ENCODE measurements at regions of chr12 and their contacts with region 1.

Region 1: DNA sequence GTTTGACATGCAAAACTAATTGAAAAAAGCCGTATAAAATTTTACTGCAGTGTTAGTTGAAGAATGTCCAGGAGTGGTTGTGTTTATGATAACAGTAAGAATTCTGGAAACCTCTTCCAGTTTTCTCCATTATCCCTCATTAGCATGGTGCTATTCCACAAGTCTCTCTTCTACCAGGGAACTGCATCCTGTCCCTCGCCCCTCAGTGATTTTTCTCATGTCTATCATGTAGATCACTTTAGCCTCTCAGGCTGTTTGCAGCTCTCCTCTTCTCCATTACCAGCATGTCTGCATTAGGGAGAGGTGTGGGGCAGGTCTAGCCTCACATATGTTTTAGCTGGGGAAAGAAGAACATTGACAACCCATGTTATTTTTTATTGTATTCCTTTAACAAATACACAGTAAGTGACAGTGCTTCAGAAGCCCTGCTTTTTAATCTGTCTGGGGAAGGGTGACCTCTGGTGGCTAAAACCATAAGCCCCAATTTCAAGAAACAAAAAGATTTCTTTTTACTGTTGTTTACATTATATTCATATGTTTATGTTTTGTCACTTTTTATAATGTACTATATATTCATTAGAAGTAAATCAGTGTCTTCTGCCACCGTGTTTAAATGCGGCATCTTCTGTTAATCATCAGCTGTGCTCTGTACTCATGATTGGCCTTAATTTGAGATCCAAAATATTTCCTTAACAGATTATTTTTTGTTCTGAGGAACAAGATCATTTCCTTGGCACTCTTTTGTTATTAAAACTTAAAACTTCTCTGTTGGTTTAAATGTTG is 70.7 kb downstream of the RASSF8 start:
- DNase-seq: peak; percentile 85
- ATAC-seq: peak; percentile 56
- H3K4me3 ChIP-seq: no peak overlapping the region
- H3K27ac ChIP-seq: no peak overlapping the region
- H3K4me1 ChIP-seq: peaks cover 29% of the 10 kb centered on the region
- H3K27me3 ChIP-seq: no peaks in the 10 kb centered on the region
- CTCF ChIP-seq: peak; percentile 97

Region 2: DNA sequence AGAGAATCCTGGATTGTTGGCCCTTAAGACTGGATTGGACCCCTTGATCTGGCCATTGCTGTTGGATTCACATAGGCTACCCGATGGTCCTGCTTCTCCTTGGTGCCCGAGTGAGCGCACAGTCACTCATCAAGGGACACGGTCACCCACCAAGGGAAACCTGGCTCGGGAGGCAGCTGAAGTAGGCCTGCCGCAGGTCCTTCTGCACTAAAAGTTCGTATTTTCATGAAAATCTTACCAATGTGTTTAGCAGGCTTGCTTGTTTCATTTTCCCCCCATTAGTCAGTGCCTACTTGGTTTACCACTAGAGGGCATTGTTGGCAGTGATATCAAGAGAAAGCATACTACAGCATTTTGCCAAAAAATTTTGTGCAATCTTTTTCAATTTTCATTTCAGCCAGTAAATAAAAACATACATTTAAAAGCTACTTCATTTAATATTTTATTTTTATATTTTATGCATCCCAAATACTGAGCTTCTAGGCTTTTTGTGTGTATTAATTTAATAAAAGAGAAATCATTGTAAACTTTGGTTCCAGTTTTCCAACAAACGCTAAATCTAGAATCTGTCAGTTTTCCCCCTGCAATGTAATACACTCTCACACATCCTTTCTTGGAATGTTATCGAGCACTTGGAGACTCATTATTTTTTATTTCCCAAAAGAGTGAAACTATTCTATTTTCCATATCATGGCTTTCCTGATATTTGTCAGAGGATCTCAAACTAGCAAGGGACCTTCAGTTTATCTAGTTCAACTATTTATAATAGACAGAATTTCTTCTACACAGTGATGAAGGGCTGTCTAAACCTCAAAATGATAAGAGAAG is 592.7 kb before region 1 on chr12:
- CTCF ChIA-PET with region 1: no interaction called
- POLR2A ChIA-PET with region 1: no interaction called
- intact Hi-C with region 1: loop called (anchors 2 kb)
- DNase-seq: peak; percentile 84
- ATAC-seq: peak; percentile 69
- H3K4me3 ChIP-seq: peak overlapping the region; percentile 82
- H3K27ac ChIP-seq: no peak overlapping the region
- H3K4me1 ChIP-seq: peaks cover 20% of the 10 kb centered on the region
- H3K27me3 ChIP-seq: no peaks in the 10 kb centered on the region
- CTCF ChIP-seq: peak; percentile 93

Region 3: GRCh38 chr12:25677232-25677937 is 351.8 kb before region 1 on chr12:
- CTCF ChIA-PET with region 1: no interaction called
- POLR2A ChIA-PET with region 1: no interaction called
- intact Hi-C with region 1: loop called (anchors 1 kb)
- DNase-seq: peak; percentile 46
- ATAC-seq: peak; percentile 74
- H3K4me3 ChIP-seq: no peak overlapping the region
- H3K27ac ChIP-seq: no peak overlapping the region
- H3K4me1 ChIP-seq: peaks cover 5% of the 10 kb centered on the region; the same call in 1 of the 2 replicates
- H3K27me3 ChIP-seq: no peaks in the 10 kb centered on the region
- CTCF ChIP-seq: peak; percentile 52

Region 4: DNA sequence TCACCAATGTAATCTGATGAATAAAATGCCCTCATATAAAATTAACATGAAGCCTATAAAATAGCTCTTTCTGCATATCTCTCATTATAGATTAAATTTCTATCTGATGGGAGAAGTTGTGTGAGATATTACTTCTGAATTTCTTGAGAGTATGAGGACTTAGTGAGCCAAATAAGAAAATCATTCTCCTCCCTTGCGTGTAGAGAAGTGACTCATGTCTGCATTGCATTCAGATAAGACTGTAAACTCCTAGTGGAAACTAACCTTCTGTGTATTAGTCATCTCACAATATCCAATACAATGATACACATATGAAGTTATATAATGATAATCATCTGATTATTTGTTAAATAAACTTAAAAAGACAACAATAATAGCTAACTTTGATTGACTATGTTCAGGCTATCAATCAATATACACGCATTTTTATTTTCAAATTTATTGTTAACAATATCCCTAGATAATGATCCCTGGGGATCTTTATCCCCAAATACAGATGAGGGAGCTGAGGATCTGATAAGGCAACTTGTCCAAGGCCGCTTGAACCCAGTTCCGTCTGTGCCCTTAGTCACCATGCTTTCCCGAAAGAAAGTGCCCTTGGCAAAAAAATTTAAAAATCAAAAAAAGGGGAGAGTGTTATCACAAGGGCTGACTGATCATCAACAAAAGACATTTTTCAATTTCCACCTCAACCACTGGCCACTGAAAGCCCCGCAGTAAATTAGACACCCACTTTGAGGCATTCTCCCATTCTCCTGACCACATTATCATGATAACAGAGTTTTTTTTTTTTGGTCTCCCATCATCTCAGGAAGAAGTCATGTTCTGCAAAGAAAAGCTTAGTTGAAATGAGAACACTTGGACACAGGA is 259.8 kb before region 1 on chr12:
- CTCF ChIA-PET with region 1: no interaction called
- POLR2A ChIA-PET with region 1: no interaction called
- intact Hi-C with region 1: loop called (anchors 5 kb)
- DNase-seq: peak; percentile 92
- ATAC-seq: peak; percentile 98
- H3K4me3 ChIP-seq: no peak overlapping the region
- H3K27ac ChIP-seq: peak overlapping the region; percentile 40
- H3K4me1 ChIP-seq: peaks cover 28% of the 10 kb centered on the region
- H3K27me3 ChIP-seq: no peaks in the 10 kb centered on the region
- CTCF ChIP-seq: no peak

Region 5: GRCh38 chr12:25829192-25829591 is 200.0 kb before region 1 on chr12:
- CTCF ChIA-PET with region 1: no interaction called
- POLR2A ChIA-PET with region 1: no interaction called
- intact Hi-C with region 1: loop called (anchors 2 kb)
- DNase-seq: peak; percentile 99
- ATAC-seq: peak; percentile 92
- H3K4me3 ChIP-seq: no peak overlapping the region
- H3K27ac ChIP-seq: peak overlapping the region; percentile 84
- H3K4me1 ChIP-seq: peaks cover 37% of the 10 kb centered on the region
- H3K27me3 ChIP-seq: no peaks in the 10 kb centered on the region
- CTCF ChIP-seq: peak; percentile 30; the same call in 1 of the 2 replicates

Region 6: DNA sequence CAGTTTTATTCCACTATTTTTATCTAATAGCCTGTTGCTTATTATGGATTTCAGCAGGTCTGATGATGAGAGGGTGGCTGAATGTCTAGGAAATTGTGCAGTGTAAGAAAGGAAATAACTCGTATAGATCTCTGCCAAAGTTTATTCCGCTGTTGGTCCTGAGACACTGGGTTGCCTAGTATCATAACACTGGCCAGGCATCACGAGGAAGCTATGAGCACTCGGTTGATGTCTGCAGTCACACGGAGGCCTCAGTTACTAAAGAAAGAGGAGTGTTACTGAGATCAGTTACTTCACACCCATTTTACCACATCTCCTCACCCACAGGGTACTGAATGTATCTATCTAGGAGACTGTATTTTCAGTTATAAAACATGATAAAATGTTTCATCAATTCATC is 73.8 kb after region 1 on chr12:
- CTCF ChIA-PET with region 1: no interaction called
- POLR2A ChIA-PET with region 1: no interaction called
- intact Hi-C with region 1: no loop called
- DNase-seq: no peak
- ATAC-seq: no peak
- H3K4me3 ChIP-seq: no peak overlapping the region
- H3K27ac ChIP-seq: no peak overlapping the region
- H3K4me1 ChIP-seq: peaks cover 28% of the 10 kb centered on the region
- H3K27me3 ChIP-seq: no peaks in the 10 kb centered on the region
- CTCF ChIP-seq: no peak

Measured in PC-3 (cell line).